ENCODE measurements at regions of chr15 and their contacts with region 1.

Region 1: DNA sequence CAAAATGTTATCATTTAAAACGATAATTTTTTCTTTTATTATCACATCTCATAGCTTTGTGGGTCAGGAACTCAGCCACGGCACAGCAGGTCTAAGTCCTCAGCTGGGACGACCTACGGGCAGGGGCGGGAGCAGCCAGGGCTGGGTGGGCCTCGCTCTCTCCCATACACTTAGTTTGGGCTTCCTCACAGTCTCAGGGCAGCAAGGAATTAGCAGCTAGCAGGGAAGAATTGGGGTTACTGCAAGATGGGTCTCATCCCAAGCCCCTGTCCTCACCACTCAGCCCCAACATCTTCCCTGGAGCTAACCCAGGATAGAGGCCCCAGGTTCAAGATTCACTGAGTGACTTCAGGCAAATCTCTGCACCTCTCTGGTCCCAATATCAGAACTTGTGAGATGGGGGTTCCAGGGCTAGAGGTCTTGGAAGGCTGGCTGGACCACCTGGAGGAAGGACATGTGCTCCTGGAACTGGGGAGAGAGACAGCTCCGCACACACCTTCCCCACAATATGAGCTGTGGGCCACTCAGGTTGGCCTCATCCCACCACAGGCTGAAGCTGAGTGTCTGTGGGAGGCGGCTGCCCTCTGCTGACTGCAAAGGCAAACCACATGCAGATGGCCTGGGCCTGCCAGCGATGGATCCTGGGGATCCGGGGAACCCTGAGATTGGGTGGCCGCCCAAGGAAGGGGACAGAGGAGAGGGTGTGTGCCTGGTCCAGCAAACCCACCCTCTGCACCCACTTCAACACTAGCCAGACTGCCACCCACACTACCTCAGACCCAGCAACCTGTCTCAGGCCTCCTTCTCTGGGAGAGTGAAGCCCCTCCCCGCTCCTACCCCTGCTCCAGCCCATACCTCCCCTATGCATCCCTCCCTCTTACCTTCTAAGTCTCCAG is 45.0 kb downstream of the CYP11A1 start:
- DNase-seq: peak; percentile 80
- ATAC-seq: peak; percentile 87
- H3K4me3 Mint-ChIP-seq: no peak overlapping the region
- H3K27ac Mint-ChIP-seq: no peak overlapping the region
- H3K4me1 Mint-ChIP-seq: peaks cover 2% of the 10 kb centered on the region
- H3K27me3 Mint-ChIP-seq: no peaks in the 10 kb centered on the region

Region 2: DNA sequence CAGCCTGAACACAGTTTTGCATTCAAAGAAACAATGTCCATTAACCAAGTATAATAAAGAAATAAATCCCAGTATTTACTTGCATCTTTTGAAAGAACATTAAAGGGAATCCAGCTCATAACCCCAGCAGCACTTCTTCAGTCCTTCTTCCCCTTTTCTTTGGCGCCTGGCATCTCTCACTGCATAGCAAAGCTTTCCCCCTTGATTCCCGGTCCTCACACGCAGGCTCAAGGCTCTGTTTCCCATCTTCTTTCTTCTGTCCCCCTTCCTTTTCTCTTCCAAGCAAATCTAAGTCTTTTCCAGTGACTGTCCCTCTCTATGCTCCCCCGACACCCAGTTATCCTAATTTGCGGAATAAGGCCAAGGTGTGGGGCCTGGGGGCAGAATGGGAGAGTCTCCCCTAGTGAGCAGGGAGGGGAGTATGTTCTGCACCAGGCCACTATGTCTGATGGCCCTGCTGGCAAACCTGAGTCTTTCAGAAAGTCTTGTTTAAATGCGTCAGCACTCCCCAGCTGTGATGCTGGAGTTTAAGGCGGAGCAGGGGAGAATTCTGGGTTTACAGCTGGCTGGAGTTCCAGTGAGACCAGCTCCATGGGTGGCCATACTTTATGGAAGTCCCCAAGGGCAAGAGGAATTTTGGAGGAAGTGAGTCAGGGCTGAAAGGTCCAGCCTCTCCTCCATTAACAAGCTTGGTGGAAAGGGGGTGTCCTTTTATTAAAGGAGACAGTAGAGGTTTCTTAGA is 282.1 kb before region 1 on chr15:
- CTCF ChIA-PET with region 1: no interaction called
- POLR2A ChIA-PET with region 1: no interaction called
- intact Hi-C with region 1: no loop called
- DNase-seq: no peak
- ATAC-seq: no peak
- H3K4me3 Mint-ChIP-seq: no peak overlapping the region
- H3K27ac Mint-ChIP-seq: no peak overlapping the region
- H3K4me1 Mint-ChIP-seq: no peaks in the 10 kb centered on the region
- H3K27me3 Mint-ChIP-seq: no peaks in the 10 kb centered on the region

Region 3: GRCh38 chr15:74307827-74308644 is 14.4 kb before region 1 on chr15:
- CTCF ChIA-PET with region 1: interaction called, 17 read pairs
- POLR2A ChIA-PET with region 1: no interaction called
- intact Hi-C with region 1: no loop called
- DNase-seq: peak; percentile 62
- ATAC-seq: peak; percentile 81
- H3K4me3 Mint-ChIP-seq: no peak overlapping the region
- H3K27ac Mint-ChIP-seq: no peak overlapping the region
- H3K4me1 Mint-ChIP-seq: no peaks in the 10 kb centered on the region
- H3K27me3 Mint-ChIP-seq: peaks cover 12% of the 10 kb centered on the region